ENCODE measurements at regions of chr4 and their contacts with region 1.

Region 1: GRCh38 chr4:7192252-7193029 is at the start of gene SORCS2:
- DNase-seq: peak in 1 of 2 donors; percentile 89
- H3K4me3 ChIP-seq: no peak within 1 kb of the TSS
- CTCF ChIP-seq: no peak
- POLR2A ChIP-seq: no peak
- total RNA-seq, gene SORCS2: 1.1 to 6.4 (median 1.5) TPM

Region 2: GRCh38 chr4:7167706-7168105 is 24.7 kb before region 1 on chr4:
- intact Hi-C with region 1: no loop called
- DNase-seq: peak in 1 of 2 donors; percentile 76
- H3K4me3 ChIP-seq: no peak overlapping the region
- CTCF ChIP-seq: no peak
- POLR2A ChIP-seq: no peak

Region 3: DNA sequence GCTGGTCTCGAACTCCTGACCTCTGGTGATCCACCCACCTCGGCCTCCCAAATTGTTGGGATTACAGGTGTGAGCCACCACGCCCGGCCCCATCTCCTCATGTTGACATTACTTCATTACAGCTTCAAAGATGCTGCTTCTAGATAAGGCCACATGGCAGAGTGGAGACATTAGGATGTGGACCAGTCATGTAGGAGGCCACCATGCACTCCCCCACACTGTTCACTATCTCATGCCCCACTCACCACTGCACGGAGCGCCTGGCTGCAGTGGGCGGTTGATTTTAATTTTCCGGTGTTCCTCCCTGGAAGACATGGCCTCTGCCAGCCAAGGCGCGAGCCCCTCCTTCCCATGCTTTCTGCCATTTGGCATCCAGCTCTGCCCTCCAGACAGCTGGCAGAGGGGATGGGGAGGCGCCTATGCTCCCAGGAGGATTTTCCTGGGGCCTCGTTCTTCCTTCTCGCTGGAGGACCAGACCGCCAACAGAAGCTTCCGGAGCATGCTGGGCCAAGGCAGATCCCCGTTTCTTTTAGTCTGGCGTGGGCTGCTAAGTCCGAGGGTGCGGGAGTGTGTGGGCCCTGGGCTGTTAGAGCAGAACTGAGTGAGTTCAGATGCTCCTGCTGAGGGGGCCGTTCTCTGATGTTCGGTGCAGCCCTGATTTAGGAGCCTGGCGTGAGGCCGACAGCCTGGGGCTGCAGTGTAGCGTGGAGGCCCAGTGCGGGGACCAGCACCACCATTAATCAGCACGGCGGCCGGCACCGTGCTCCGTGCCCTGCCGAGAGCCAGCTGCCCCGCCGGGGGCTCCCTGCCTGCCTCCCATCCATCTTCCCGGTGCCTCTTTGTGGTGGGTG is 93.0 kb after region 1 on chr4:
- intact Hi-C with region 1: loop called (anchors 5 kb)
- DNase-seq: no peak
- H3K4me3 ChIP-seq: no peak overlapping the region
- CTCF ChIP-seq: no peak
- POLR2A ChIP-seq: no peak

Region 4: GRCh38 chr4:7295911-7296660 is 103.6 kb after region 1 on chr4:
- intact Hi-C with region 1: loop called (anchors 5 kb)
- DNase-seq: no peak
- H3K4me3 ChIP-seq: no peak overlapping the region
- CTCF ChIP-seq: no peak
- POLR2A ChIP-seq: no peak

Region 5: DNA sequence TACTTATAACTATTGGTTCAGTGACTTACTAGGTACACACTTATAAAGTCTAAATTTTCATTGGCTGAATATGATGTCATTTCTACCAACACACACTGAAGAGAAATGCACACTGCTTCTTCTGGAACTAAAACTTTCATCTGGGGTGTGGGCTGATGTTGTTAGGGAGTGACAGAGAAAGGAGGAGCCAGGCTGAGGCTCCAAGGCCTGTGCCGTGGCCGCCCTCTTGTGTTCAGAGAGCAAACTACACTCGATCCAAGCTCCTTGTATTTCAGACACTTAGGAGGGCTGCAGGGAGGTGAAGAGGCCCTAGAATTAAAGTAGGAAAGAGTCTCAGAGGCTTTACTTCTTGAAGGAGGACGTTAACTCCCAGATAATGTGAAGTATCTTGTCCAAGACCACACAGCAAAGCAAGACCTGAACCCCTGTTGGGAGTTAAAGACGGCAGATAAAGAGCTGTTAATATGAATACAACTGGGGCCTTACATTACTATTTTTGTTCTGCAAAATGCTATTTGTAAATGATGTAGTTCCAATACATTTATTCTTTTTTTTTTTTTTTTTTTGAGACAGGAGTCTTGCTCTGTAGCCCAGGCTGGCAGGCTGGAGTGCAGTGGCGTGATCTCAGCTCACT is 609.8 kb after region 1 on chr4:
- intact Hi-C with region 1: loop called (anchors 10 kb)
- DNase-seq: peak; percentile 74 to 95
- H3K4me3 ChIP-seq: no peak overlapping the region
- CTCF ChIP-seq: peak in 1 of 3 donors; percentile 74
- POLR2A ChIP-seq: no peak

Measured in lower leg skin (tissue), 4 donors.